Naive thymus-derived CD8-positive, alpha-beta T cell (primary cell): ENCODE measurements at regions of chr18 and their contacts with region 1.

Region 1: DNA sequence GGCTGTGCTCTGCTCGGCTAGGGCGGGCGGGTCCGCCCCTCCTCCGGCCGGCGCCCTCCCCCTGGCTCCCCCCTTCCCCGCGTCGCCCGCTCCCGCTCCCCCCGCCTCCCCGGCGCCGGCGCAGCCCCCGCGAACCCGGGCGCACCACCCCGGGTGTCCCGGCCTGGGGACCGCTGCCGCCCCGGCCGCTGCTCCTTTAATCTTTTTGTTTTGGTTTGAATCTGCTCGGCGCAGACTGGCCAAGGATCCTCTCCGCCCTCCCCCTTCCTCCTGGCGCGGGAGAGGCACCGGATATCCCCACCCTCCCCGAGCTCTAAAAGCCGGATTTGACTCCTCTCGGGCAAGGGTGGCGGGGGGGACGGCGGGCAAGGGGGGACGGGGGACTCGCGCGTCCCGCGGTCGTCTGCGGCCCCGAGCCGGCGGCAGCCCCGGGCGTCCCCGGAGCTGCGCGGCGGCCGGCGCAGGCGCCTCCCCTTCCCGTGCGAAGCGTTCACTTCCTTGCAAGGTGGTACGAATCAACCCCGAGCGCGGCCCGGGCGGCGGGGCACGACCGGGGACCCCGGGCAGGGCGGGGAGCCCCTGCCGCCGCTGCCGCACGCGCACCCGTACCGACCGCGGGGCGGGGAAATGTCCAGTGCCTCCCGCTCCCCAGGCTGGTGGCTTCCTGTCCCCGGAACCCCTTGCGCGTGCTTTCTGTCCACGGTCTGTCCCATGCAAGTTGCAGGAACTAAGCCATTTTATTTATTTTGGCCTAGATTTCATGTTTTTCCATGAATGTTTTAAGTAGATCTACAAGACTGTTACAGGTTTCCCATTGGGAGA is at the start of gene PTGR3:
- DNase-seq: peak; percentile 49 to 85 (median 68)
- ATAC-seq: peak; percentile 48 to 58
- H3K4me3 Mint-ChIP-seq: peak within 1 kb of the TSS; percentile 95 to 100 (median 98)
- H3K27ac Mint-ChIP-seq: peak within 1 kb of the TSS; percentile 93 to 99 (median 97)
- H3K4me1 Mint-ChIP-seq: peaks cover 39 to 64% (median 59%) of the 10 kb centered on the region in 4 donors
- H3K27me3 Mint-ChIP-seq: no peaks in the 10 kb centered on the region
- polyA plus RNA-seq, gene PTGR3: 14.7 to 28.5 (median 19.6) TPM

Region 2: DNA sequence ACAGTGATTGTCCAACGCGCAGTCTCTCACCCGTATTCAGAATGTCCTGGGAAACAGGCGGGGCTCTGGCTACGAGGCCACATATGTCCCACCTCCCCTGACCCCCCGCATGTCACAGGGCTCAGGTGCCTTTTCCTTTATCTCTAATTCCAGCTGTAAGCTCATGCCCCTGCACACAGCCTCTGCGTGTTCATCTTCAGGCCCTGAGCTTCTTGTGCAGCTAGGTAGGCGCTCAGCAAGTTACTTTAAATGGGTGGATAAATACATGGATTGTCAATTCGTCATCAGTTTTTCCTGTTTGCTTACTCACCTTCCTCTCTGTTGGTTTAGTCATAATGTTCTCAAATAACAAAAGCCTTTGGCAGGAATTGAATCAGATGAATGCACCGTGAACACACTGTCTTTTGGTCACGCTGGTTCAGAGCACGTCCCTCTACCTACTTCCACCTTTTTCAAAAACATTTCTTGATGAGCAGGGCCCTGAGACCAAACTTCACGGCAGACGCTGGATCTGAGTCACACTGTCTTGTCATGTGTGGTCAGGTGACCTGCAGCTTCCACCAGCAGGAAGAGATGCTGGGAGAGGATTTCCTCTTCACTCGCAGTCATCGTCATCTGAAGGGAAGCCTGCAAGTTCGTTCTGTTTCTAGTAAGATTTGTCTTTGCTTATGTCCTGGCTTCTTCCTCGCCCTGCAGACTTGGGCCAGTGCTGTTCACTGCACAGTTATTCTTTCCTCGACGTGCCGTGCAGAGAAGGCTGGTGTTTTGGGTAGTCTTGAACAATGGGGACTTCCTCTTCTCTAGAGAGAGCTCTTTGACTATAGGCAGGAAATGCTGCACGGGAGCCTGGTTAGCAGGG is 138.5 kb before region 1 on chr18:
- POLR2A ChIA-PET with region 1: interaction called, 30 read pairs
- DNase-seq: peak in 9 of 10 donors; percentile 36 to 83 (median 58)
- ATAC-seq: peak; percentile 85 to 87
- H3K4me3 Mint-ChIP-seq: peak overlapping the region; percentile 76 to 93 (median 90)
- H3K27ac Mint-ChIP-seq: peak overlapping the region; percentile 92 to 100 (median 96)
- H3K4me1 Mint-ChIP-seq: peaks cover 25 to 54% (median 40%) of the 10 kb centered on the region in 4 donors
- H3K27me3 Mint-ChIP-seq: no peaks in the 10 kb centered on the region

Region 3: DNA sequence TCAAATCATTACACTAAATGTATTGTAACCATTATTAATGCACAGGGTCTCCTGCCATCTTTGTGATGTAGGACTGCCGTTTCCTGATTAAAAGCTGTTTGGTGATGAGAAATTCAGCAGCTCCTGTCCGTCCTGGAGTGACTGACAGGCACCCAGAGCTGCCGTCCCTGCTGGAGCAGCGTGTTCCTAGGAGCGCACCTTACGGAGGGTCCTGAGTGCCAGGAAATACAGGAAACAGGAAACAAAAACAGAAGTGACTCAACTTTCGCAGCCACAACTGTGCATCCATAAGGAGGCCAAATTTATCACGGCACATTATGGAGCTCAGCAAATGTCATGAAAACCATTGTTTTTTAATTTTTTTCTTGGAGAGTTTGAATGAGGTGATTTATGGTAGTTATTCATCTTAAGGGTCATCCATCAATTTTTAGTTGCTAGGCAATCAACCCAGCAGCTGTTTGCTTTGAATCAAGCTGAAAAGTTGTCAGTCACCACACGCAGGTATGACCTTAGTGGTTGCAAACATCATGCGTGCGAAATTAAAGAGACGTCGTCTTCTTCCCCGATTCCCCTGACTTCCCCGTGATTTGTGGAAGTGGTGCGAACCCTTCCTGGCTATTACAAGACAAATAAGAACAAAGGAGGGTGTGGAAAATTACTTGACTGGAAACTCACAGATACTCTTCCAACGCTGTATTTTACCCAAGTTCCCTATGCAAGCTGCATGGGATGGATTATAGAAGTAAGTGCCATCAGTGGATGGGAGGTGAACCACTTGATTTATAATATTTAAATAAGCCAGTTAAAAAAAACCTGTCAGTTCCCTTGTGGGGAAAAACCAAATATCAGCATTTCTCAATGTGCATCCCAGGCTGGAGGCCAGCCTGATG is 21.1 kb after region 1 on chr18:
- POLR2A ChIA-PET with region 1: interaction called, 16 read pairs
- DNase-seq: no peak
- ATAC-seq: no peak
- H3K4me3 Mint-ChIP-seq: no peak overlapping the region
- H3K27ac Mint-ChIP-seq: peak overlapping the region in 5 of 10 donors; percentile 36 to 63 (median 48)
- H3K4me1 Mint-ChIP-seq: peaks cover 25 to 81% (median 69%) of the 10 kb centered on the region in 4 donors
- H3K27me3 Mint-ChIP-seq: no peaks in the 10 kb centered on the region

Region 4: DNA sequence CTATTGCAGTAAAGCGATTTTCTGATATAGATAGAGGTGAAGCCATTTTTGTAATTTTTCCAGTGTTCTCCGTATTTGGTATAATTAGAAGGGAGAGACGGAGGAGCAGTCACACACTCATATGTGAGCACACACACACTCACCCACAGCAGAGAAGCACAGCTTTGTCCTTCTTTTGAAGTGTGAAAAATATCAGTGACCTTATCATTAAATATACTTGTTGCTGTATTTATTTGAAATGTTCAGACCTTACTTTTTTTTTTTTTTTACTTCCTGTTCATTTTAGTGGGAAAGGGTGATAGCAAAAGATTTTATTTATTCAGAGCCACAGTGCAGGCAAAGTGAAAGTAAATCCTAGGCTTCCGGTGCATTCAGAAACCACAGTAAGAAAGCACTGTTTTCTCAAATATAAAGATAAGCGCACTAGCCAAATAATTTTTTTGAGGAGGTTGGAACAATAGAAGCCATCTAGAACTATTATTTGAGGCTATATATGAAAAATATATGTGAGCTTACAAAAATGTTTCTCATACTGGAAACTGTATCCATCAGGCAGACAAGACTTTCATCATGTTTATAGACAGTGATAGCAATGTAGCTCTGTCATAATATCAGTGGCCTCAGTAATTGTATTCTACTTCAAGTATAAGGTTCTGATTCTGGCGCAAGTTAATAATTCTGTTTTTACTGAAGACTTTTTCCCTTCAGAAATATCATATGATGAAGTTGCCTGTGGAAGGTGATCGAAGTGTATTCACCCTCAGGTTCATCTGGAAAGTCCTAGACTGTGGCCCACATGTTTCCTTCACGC is 38.5 kb after region 1 on chr18:
- POLR2A ChIA-PET with region 1: interaction called, 93 read pairs
- DNase-seq: peak in 3 of 10 donors; percentile 52 to 58 (median 55)
- ATAC-seq: peak; percentile 54 to 64
- H3K4me3 Mint-ChIP-seq: peak overlapping the region; percentile 80 to 93 (median 89)
- H3K27ac Mint-ChIP-seq: peak overlapping the region; percentile 89 to 98 (median 95)
- H3K4me1 Mint-ChIP-seq: peaks cover 36 to 85% (median 80%) of the 10 kb centered on the region in 4 donors
- H3K27me3 Mint-ChIP-seq: no peaks in the 10 kb centered on the region

Region 5: DNA sequence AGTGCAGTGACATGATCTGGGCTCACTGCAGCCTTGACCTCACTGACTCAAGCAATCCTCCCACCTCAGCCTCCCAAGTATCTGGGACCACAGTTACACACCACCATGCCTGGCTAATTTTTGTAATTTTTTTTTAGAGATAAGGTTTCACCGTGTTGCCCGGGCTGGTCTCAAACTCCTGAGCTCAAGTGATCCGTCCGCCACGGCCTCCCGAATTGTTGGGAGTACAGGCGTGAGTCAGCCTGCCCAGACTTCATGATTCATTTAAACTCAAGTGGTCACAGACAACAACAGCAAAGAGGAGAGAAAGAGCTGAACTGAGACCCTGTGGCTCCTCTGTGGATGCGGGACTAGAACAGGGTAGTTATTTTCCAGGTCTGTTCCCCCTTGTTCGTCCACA is 84.3 kb after region 1 on chr18:
- POLR2A ChIA-PET with region 1: no interaction called
- DNase-seq: no peak
- ATAC-seq: no peak
- H3K4me3 Mint-ChIP-seq: no peak overlapping the region
- H3K27ac Mint-ChIP-seq: peak overlapping the region in 2 of 10 donors; percentile 7 to 61
- H3K4me1 Mint-ChIP-seq: peaks cover 0 to 10% (median 0%) of the 10 kb centered on the region in 4 donors
- H3K27me3 Mint-ChIP-seq: no peaks in the 10 kb centered on the region

Region 6: DNA sequence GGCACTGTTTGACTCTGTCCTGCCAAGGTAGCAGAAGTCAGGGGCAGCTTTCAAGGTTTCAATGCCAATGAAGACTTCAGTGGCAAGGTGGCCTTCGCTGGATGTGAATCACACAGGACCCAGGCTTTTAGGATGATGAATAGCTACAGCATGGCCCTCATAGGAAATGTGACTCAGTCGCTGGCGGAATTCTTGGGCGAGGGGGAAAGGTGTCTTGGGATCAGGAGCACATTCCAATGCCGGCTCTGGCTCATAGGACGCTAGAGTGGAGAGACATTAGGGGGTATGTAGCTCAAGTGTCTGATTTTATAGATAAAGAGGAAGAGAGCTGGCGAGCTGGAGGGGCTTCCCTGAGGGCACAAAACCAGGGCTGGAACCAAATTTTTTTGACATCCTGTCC is 149.6 kb after region 1 on chr18:
- POLR2A ChIA-PET with region 1: no interaction called
- DNase-seq: no peak
- ATAC-seq: no peak
- H3K4me3 Mint-ChIP-seq: no peak overlapping the region
- H3K27ac Mint-ChIP-seq: peak overlapping the region in 1 of 10 donors; percentile 70
- H3K4me1 Mint-ChIP-seq: peaks cover 0 to 6% (median 3%) of the 10 kb centered on the region in 4 donors
- H3K27me3 Mint-ChIP-seq: peaks cover 0 to 11% (median 5%) of the 10 kb centered on the region in 5 donors